Panc1 (cell line): ENCODE measurements at regions of chr7 and their contacts with region 1.

Region 1: DNA sequence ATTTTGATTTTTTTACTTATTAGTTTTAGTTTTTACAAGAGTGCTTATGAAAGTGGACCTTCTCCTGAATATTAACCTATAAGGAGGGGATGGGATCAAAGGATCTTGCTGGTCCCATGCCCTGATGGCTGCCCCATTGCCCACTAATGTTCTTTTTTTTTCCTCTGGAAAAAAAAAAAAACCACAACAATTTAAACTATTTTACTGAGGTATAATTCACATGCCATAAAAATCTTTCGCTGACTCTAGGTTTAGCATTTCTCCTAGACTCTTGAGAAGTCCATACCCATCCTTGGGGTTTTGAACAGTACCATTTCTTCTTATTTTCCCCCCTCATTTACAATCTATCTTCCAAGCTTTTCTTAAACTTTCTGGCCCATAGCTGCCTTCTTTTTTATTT is 481.8 kb downstream of the TFEC start:
- DNase-seq: no peak
- ATAC-seq: no peak
- H3K4me3 ChIP-seq: no peak overlapping the region
- H3K27ac ChIP-seq: no peak overlapping the region
- H3K4me1 ChIP-seq: no peaks in the 10 kb centered on the region
- H3K27me3 ChIP-seq: no peaks in the 10 kb centered on the region
- CTCF ChIP-seq: no peak

Region 2: DNA sequence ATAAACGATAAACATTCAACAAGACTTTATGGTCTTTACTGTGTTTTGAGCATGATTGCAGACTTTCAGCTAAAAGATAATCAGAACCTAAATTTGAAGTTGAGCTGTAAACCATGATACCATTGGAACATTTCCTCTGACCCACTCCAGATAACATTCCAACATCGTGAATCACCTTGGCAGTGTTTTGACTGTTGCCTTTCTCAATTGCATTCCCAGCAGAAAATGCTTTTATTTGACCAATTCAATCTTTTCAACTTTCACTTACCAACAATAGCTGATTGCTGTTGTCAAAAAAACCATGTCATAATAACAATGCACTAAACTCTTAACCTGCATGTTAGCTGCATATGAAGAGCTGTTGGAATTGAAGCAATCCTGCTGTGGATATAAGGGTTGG is 461.3 kb before region 1 on chr7:
- CTCF ChIA-PET with region 1: no interaction called
- POLR2A ChIA-PET with region 1: no interaction called
- in situ Hi-C with region 1: no loop called
- intact Hi-C with region 1: no loop called
- DNase-seq: no peak
- ATAC-seq: no peak
- H3K4me3 ChIP-seq: no peak overlapping the region
- H3K27ac ChIP-seq: no peak overlapping the region
- H3K4me1 ChIP-seq: no peaks in the 10 kb centered on the region
- H3K27me3 ChIP-seq: no peaks in the 10 kb centered on the region
- CTCF ChIP-seq: no peak

Region 3: GRCh38 chr7:115838829-115839228 is 290.1 kb after region 1 on chr7:
- CTCF ChIA-PET with region 1: interaction called, 12 read pairs
- POLR2A ChIA-PET with region 1: no interaction called
- in situ Hi-C with region 1: no loop called
- intact Hi-C with region 1: no loop called
- DNase-seq: no peak
- ATAC-seq: no peak
- H3K4me3 ChIP-seq: no peak overlapping the region
- H3K27ac ChIP-seq: no peak overlapping the region
- H3K4me1 ChIP-seq: no peaks in the 10 kb centered on the region
- H3K27me3 ChIP-seq: no peaks in the 10 kb centered on the region
- CTCF ChIP-seq: no peak